HepG2 (cell line): ENCODE measurements at regions of chr9 and their contacts with region 1.

Region 1: GRCh38 chr9:36728651-36729520 is 156.2 kb downstream of the MELK start:
- DNase-seq: peak; percentile 54
- ATAC-seq: peak; percentile 95
- H3K4me3 ChIP-seq: no peak overlapping the region
- H3K27ac ChIP-seq: no peak overlapping the region
- H3K4me1 ChIP-seq: no peaks in the 10 kb centered on the region; the same call in 1 of the 2 replicates
- H3K27me3 ChIP-seq: peaks cover 0 to 15% of the 10 kb centered on the region in 2 experiments; a peak in 3 of 5 replicates
- CTCF ChIP-seq: peak; percentile 89
- EP300 ChIP-seq: no peak
- POLR2A ChIP-seq: no peak
- RAD21 ChIP-seq: peak; percentile 78

Region 2: GRCh38 chr9:36415822-36416515 is 312.9 kb before region 1 on chr9:
- CTCF ChIA-PET with region 1: no interaction called
- POLR2A ChIA-PET with region 1: no interaction called
- in situ Hi-C with region 1: no loop called
- intact Hi-C with region 1: no loop called
- DNase-seq: no peak
- ATAC-seq: no peak
- H3K4me3 ChIP-seq: no peak overlapping the region
- H3K27ac ChIP-seq: no peak overlapping the region
- H3K4me1 ChIP-seq: peaks cover 36% of the 10 kb centered on the region
- H3K27me3 ChIP-seq: no peaks in the 10 kb centered on the region
- CTCF ChIP-seq: peak; percentile 21; the same call in 1 of the 2 replicates
- EP300 ChIP-seq: no peak
- POLR2A ChIP-seq: no peak
- RAD21 ChIP-seq: no peak

Region 3: DNA sequence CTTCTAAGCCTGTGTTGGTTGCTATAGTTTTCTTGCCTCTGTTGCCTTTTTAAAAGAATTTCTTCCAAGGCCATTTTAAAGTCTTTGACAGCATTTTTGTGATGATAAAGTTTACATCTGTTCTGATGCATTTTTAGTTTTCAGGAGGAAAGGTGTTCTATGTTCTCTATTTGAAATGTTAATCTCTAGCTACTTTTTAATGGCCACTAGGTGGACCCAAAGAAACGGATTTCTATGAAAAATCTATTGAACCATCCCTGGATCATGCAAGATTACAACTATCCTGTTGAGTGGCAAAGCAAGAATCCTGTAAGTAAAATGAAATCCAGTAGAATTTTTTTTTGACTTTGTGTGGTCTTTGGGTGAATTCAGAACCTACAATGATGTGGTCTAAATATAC is 96.0 kb before region 1 on chr9:
- CTCF ChIA-PET with region 1: interaction called, 15 read pairs
- POLR2A ChIA-PET with region 1: no interaction called
- in situ Hi-C with region 1: loop called (anchors 5 kb)
- intact Hi-C with region 1: loop called (anchors 1 kb)
- DNase-seq: peak; percentile 15
- ATAC-seq: no peak; the same call in 2 of the 3 replicates
- H3K4me3 ChIP-seq: no peak overlapping the region
- H3K27ac ChIP-seq: no peak overlapping the region
- H3K4me1 ChIP-seq: no peaks in the 10 kb centered on the region
- H3K27me3 ChIP-seq: no peaks in the 10 kb centered on the region
- CTCF ChIP-seq: peak; percentile 38
- EP300 ChIP-seq: no peak
- POLR2A ChIP-seq: no peak
- RAD21 ChIP-seq: no peak

Region 4: GRCh38 chr9:36798350-36799065 is 69.6 kb after region 1 on chr9:
- CTCF ChIA-PET with region 1: no interaction called
- POLR2A ChIA-PET with region 1: no interaction called
- in situ Hi-C with region 1: no loop called
- intact Hi-C with region 1: no loop called
- DNase-seq: peak; percentile 24
- ATAC-seq: peak; percentile 92
- H3K4me3 ChIP-seq: no peak overlapping the region
- H3K27ac ChIP-seq: no peak overlapping the region
- H3K4me1 ChIP-seq: peaks cover 10% of the 10 kb centered on the region
- H3K27me3 ChIP-seq: peaks cover 0 to 20% of the 10 kb centered on the region in 2 experiments; a peak in 4 of 5 replicates
- CTCF ChIP-seq: peak; percentile 79
- EP300 ChIP-seq: no peak
- POLR2A ChIP-seq: no peak
- RAD21 ChIP-seq: peak; percentile 44; the same call in 1 of the 2 replicates